ENCODE measurements at regions of chr11 and their contacts with region 1.

Region 1: GRCh38 chr11:89613911-89614310 is 96.2 kb upstream of the TRIM77 start:
- DNase-seq: no peak
- H3K4me3 ChIP-seq: peak overlapping the region; percentile 7 to 29
- H3K27ac ChIP-seq: no peak overlapping the region
- H3K4me1 ChIP-seq: peaks cover 3 to 4% of the 10 kb centered on the region in 2 donors
- H3K27me3 ChIP-seq: no peaks in the 10 kb centered on the region
- CTCF ChIP-seq: no peak

Region 2: GRCh38 chr11:89327885-89328284 is 286.0 kb before region 1 on chr11:
- intact Hi-C with region 1: loop called (anchors 5 kb)
- DNase-seq: no peak
- H3K4me3 ChIP-seq: no peak overlapping the region
- H3K27ac ChIP-seq: no peak overlapping the region
- H3K4me1 ChIP-seq: no peaks in the 10 kb centered on the region
- H3K27me3 ChIP-seq: no peaks in the 10 kb centered on the region
- CTCF ChIP-seq: no peak

Region 3: GRCh38 chr11:89443361-89444322 is 170.3 kb before region 1 on chr11:
- intact Hi-C with region 1: loop called (anchors 10 kb)
- DNase-seq: no peak
- H3K4me3 ChIP-seq: no peak overlapping the region
- H3K27ac ChIP-seq: peak overlapping the region in 1 of 2 donors; percentile 48
- H3K4me1 ChIP-seq: peaks cover 0 to 3% of the 10 kb centered on the region in 2 donors
- H3K27me3 ChIP-seq: no peaks in the 10 kb centered on the region
- CTCF ChIP-seq: no peak

Measured in ascending aorta (tissue), 2 donors.